Left ventricle myocardium inferior (tissue), 1 donor: ENCODE measurements at regions of chr3 and their contacts with region 1.

Region 1: GRCh38 chr3:48439820-48440589 is at the starts of genes CCDC51 and TMA7:
- DNase-seq: peak; percentile 99
- H3K4me3 ChIP-seq: peak within 1 kb of the TSS; percentile 75
- H3K27ac ChIP-seq: peak within 1 kb of the TSS; percentile 90
- H3K4me1 ChIP-seq: peaks cover 38% of the 10 kb centered on the region
- H3K27me3 ChIP-seq: no peaks in the 10 kb centered on the region
- CTCF ChIP-seq: no peak
- total RNA-seq, gene CCDC51: 13.9 TPM
- total RNA-seq, gene TMA7: 258 TPM

Region 2: GRCh38 chr3:48273594-48274211 is 166.3 kb before region 1 on chr3:
- intact Hi-C with region 1: loop called (anchors 10 kb)
- DNase-seq: no peak
- H3K4me3 ChIP-seq: no peak overlapping the region
- H3K27ac ChIP-seq: no peak overlapping the region
- H3K4me1 ChIP-seq: no peaks in the 10 kb centered on the region
- H3K27me3 ChIP-seq: no peaks in the 10 kb centered on the region
- CTCF ChIP-seq: peak; percentile 85

Region 3: GRCh38 chr3:48400824-48401433 is 39.1 kb before region 1 on chr3:
- intact Hi-C with region 1: loop called (anchors 5 kb)
- DNase-seq: no peak
- H3K4me3 ChIP-seq: no peak overlapping the region
- H3K27ac ChIP-seq: no peak overlapping the region
- H3K4me1 ChIP-seq: peaks cover 13% of the 10 kb centered on the region
- H3K27me3 ChIP-seq: no peaks in the 10 kb centered on the region
- CTCF ChIP-seq: peak; percentile 87

Region 4: GRCh38 chr3:48650723-48651122 is 210.7 kb after region 1 on chr3:
- intact Hi-C with region 1: no loop called
- DNase-seq: no peak
- H3K4me3 ChIP-seq: no peak overlapping the region
- H3K27ac ChIP-seq: no peak overlapping the region
- H3K4me1 ChIP-seq: peaks cover 4% of the 10 kb centered on the region
- H3K27me3 ChIP-seq: no peaks in the 10 kb centered on the region
- CTCF ChIP-seq: no peak